AG04450 (cell line): ENCODE measurements at regions of chr5 and their contacts with region 1.

Region 1: GRCh38 chr5:36305571-36306326 is 4.0 kb upstream of the RANBP3L start:
- DNase-seq: no peak
- H3K4me3 ChIP-seq: no peak overlapping the region
- H3K27ac ChIP-seq: no peak overlapping the region
- H3K27me3 ChIP-seq: no peaks in the 10 kb centered on the region
- CTCF ChIP-seq: peak; percentile 85

Region 2: GRCh38 chr5:35971186-35971877 is 334.4 kb before region 1 on chr5:
- CTCF ChIA-PET with region 1: no interaction called
- POLR2A ChIA-PET with region 1: no interaction called
- DNase-seq: no peak
- H3K4me3 ChIP-seq: no peak overlapping the region
- H3K27ac ChIP-seq: no peak overlapping the region
- H3K27me3 ChIP-seq: peaks cover under 1% of the 10 kb centered on the region
- CTCF ChIP-seq: no peak

Region 3: GRCh38 chr5:36070687-36071571 is 234.8 kb before region 1 on chr5:
- CTCF ChIA-PET with region 1: interaction called, 10 read pairs
- POLR2A ChIA-PET with region 1: no interaction called
- DNase-seq: no peak
- H3K4me3 ChIP-seq: peak overlapping the region; percentile 21
- H3K27ac ChIP-seq: no peak overlapping the region
- H3K27me3 ChIP-seq: peaks cover 9% of the 10 kb centered on the region
- CTCF ChIP-seq: no peak

Region 4: DNA sequence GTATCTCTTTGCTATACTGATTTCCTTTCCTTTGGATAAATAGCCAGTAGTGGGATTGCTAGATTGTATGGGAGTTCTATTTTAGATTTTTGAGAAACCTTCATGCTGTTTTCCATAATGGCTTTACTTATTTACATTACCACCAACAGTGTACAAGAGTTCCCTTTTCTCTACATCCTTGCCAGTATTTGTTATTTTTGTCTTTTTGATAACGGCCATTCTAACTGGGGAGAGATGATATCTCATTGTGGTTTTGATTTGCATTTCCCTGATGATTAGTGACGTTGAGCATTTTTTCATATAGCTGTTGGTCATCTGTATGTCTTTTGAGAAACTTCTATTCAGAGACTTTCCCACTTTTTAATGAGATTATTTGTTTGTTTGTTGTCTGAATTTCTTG is 89.8 kb before region 1 on chr5:
- CTCF ChIA-PET with region 1: interaction called, 14 read pairs
- POLR2A ChIA-PET with region 1: no interaction called
- DNase-seq: no peak
- H3K4me3 ChIP-seq: no peak overlapping the region
- H3K27ac ChIP-seq: no peak overlapping the region
- H3K27me3 ChIP-seq: no peaks in the 10 kb centered on the region
- CTCF ChIP-seq: no peak

Region 5: DNA sequence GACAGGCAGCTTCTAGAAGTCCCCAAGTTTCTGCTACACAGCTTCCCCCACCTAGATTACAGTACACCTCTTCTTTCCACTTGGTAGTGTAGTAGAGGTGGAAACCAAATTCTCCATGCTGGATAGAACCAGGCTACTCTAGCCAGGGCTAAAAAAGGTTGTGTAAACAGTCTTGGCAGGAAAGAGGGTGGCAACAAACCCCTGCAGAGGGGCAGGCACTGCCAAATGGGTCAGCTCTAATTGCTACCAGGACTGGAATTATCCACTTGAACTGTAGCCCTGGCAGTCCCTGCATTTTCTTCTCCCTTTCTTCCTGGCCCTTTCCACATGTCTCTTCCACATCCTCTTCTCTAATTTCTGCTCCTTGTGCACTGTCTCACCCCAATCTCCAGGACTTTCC is 28.9 kb before region 1 on chr5:
- CTCF ChIA-PET with region 1: interaction called, 16 read pairs
- POLR2A ChIA-PET with region 1: no interaction called
- DNase-seq: no peak
- H3K4me3 ChIP-seq: no peak overlapping the region
- H3K27ac ChIP-seq: no peak overlapping the region
- H3K27me3 ChIP-seq: peaks cover 6% of the 10 kb centered on the region
- CTCF ChIP-seq: no peak

Region 6: DNA sequence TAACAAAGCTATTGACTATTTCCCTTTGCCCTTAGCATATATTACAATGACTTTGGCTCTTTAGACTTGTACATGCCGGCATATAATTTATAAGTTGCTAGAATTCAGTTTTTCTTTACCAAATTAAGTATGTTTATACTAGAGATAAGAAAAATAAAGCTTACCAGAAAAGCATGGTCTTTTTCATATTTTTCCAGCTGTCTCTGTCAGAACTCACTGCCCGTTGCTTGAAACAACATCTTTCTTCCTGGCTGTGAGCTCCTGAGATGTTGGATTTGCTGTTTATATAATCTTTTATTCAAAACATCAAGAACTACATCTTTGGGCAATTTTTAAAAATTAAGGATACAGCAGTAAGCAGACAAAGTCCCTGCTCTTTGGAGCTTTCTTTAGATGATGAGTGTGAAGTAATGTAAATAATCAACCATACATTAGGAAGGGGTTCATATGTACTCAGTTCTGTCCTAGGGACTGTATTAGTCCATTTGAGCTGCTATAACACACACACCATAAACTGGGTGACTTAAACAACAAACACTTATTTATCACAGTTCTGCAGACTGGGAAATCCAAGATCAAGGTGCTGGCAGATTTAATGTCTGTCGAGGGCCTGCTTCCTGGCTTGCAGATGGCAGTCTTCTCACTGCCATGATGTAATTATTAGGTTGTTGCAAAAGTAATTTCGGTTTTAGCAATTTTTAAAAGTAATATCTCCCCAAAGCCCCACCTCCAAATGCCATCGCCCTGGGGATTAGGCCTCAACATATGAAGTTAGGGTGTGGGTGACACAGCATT is 41.3 kb after region 1 on chr5:
- CTCF ChIA-PET with region 1: interaction called, 11 read pairs
- POLR2A ChIA-PET with region 1: no interaction called
- DNase-seq: no peak
- H3K4me3 ChIP-seq: no peak overlapping the region
- H3K27ac ChIP-seq: no peak overlapping the region
- H3K27me3 ChIP-seq: peaks cover 2% of the 10 kb centered on the region
- CTCF ChIP-seq: no peak

Region 7: DNA sequence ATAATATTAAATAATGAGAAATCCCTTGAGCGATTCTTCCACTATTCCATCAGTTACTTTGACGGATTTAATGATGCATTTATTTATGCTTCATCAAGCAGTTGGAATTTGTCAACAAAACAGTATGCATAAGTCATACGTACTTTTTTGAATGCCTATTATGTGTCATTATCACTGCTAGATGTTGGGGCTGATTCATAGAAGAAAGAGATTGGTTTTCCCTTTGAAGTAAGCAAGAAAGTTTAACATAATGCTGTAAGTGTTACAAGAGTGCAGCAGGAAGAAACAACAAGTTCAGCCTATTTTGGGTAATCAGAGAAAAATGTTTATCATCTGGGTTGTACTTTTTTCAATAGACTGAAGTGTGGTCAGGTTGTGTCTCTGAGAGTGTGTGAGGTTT is 117.2 kb after region 1 on chr5:
- CTCF ChIA-PET with region 1: no interaction called
- POLR2A ChIA-PET with region 1: no interaction called
- DNase-seq: no peak
- H3K4me3 ChIP-seq: no peak overlapping the region
- H3K27ac ChIP-seq: no peak overlapping the region
- H3K27me3 ChIP-seq: no peaks in the 10 kb centered on the region
- CTCF ChIP-seq: no peak

Region 8: GRCh38 chr5:36695677-36696673 is 390.2 kb after region 1 on chr5:
- CTCF ChIA-PET with region 1: interaction called, 11 read pairs
- POLR2A ChIA-PET with region 1: no interaction called
- DNase-seq: peak; percentile 21
- H3K4me3 ChIP-seq: no peak overlapping the region
- H3K27ac ChIP-seq: no peak overlapping the region
- H3K27me3 ChIP-seq: peaks cover 7% of the 10 kb centered on the region
- CTCF ChIP-seq: peak; percentile 85